ENCODE measurements at regions of chr7 and their contacts with region 1.

Region 1: DNA sequence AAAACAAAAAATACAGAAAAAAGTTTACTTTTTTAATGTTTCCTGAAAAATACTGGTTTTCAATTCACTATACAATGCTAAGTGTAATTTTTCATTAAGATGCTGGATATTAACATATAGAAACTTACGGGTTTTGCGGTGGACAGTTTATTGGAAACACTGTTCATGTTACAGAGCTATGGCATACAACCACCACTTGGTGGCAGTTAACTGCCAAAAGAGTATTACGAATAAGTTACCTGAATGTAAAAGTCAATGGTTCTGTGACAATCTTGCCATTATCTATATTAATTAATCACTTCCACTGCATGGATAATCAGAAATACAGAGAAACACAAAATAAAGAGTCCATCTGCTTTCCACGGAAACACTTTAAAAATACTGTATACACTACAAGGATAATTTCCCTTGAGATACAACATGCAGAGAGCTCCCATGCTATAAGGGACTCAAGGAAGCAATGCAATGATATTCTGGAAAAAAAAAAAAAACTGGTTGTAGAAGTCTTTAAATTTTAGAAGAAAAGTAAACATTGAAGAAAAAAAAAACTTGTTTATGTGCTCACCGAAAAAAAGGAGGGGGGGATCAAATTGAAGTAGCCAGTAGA is 97.0 kb downstream of the TPK1 start:
- DNase-seq: peak; percentile 30
- H3K4me3 Mint-ChIP-seq: no peak overlapping the region
- H3K27ac Mint-ChIP-seq: no peak overlapping the region
- H3K4me1 Mint-ChIP-seq: no peaks in the 10 kb centered on the region
- H3K27me3 Mint-ChIP-seq: no peaks in the 10 kb centered on the region

Region 2: DNA sequence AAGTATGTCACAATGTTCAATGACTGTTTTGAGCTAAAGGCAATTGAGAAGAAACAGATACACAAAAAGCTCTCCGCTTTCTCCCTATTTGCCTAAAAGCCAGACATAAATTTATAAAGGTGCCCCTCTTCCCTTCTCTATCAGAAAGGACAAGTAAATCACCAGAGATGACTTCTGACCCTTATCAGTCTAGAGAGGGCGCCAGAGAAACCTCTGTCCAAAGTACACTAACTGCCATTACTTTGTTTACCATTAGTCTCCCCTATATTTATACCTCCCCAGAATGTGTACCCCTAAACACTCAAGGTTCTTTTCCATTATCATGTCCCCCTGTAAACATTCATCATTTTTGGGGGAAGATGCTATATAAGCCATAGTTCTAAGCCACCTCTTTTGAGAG is 47.7 kb after region 1 on chr7:
- CTCF ChIA-PET with region 1: interaction called, 14 read pairs
- DNase-seq: peak; percentile 21
- H3K4me3 Mint-ChIP-seq: no peak overlapping the region
- H3K27ac Mint-ChIP-seq: no peak overlapping the region
- H3K4me1 Mint-ChIP-seq: peaks cover 3% of the 10 kb centered on the region
- H3K27me3 Mint-ChIP-seq: no peaks in the 10 kb centered on the region

Measured in activated naive CD4-positive, alpha-beta T cell treated with anti-CD3 and anti-CD28 coated beads, Interleukin-2, amount 10 ng/mL, durations not matched to agents 7 days and 5 days (primary cell).